ENCODE measurements at regions of chrX and their contacts with region 1.

Region 1: GRCh38 chrX:126886997-126887396 is 67.5 kb downstream of the PRR32 start:
- DNase-seq: no peak

Region 2: GRCh38 chrX:126836186-126836585 is 50.8 kb before region 1 on chrX:
- intact Hi-C with region 1: loop called in 1 of 2 experiments (anchors 2 kb)
- DNase-seq: no peak

Region 3: GRCh38 chrX:127005721-127006120 is 118.7 kb after region 1 on chrX:
- intact Hi-C with region 1: no loop called
- DNase-seq: no peak

Measured in posterior vena cava (tissue), 2 donors.